PC-9 (cell line): ENCODE measurements at regions of chr11 and their contacts with region 1.

Region 1: DNA sequence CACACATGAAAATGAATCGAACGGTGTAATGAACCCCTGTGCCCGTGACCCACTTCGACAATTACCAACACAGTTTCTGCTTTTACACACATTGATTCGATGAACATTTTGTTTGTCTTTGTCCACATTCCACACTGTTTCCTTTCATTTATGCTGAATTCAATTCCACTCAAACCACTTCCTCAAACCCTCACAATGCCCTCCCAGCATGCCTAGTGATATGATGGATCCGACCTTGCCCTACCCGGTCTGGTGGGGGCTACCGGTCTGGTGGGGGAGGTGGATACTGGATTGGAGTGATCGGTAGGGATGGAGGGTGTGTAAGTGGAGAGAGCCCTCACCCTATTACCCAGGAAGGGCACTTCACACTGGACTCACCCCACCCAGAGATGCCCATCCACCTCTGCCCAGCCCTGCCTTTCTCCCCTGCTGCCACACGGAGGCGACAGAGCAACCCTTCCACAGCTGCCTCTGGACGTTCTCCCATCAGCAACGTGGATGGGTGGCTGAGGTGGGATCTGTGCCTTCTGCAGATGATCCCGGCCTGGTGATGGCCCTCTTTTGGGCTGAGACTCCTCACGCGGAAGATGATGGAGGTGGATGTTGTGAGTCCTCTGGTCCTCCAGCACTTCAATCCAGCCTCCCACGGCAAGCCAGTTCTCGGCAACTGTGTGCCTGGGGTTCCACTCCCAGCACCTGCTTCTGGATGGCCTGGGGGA is 33.0 kb upstream of the P2RY2 start:
- DNase-seq: peak; percentile 80 to 88
- H3K4me3 ChIP-seq: peak overlapping the region; percentile 36; the same call in 1 of the 2 replicates
- H3K27ac ChIP-seq: peak overlapping the region; percentile 82
- H3K4me1 ChIP-seq: peaks cover 49% of the 10 kb centered on the region
- H3K27me3 ChIP-seq: no peaks in the 10 kb centered on the region
- CTCF ChIP-seq: peak; percentile 96

Region 2: DNA sequence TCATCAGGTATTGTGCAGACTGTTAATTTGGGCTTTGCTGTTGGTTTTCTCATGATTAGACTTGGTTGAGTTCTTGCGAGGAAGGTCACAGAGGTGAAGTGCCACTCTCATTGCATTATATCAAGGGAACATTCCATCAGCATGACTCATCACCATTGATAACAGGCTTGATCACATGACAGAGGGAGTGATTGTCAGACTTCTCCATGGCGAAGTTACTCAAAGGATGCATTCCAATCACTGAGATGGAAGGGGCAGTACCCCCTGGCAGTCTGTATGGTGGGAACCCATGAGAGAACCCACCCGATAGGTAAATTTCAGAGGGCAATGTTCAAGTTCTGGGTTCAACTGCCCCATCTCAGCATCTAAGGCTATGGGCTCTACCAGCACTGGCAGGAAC is 13.6 kb after region 1 on chr11:
- CTCF ChIA-PET with region 1: interaction called, 21 read pairs
- POLR2A ChIA-PET with region 1: interaction called, 9 read pairs
- intact Hi-C with region 1: loop called (anchors 1 kb)
- DNase-seq: peak in 1 of 2 experiments; percentile 96
- H3K4me3 ChIP-seq: no peak overlapping the region
- H3K27ac ChIP-seq: peak overlapping the region; percentile 99
- H3K4me1 ChIP-seq: peaks cover 98% of the 10 kb centered on the region
- H3K27me3 ChIP-seq: no peaks in the 10 kb centered on the region
- CTCF ChIP-seq: no peak

Region 3: GRCh38 chr11:73227588-73228211 is 42.6 kb after region 1 on chr11:
- CTCF ChIA-PET with region 1: interaction called, 13 read pairs
- POLR2A ChIA-PET with region 1: interaction called, 4 read pairs
- intact Hi-C with region 1: loop called (anchors 1 kb)
- DNase-seq: peak; percentile 90 to 97
- H3K4me3 ChIP-seq: 0 out of 2 replicates have a peak overlapping the region, but pooled peaks have one; percentile 2
- H3K27ac ChIP-seq: peak overlapping the region; percentile 50
- H3K4me1 ChIP-seq: peaks cover 49% of the 10 kb centered on the region
- H3K27me3 ChIP-seq: no peaks in the 10 kb centered on the region
- CTCF ChIP-seq: peak; percentile 69

Region 4: GRCh38 chr11:73242251-73243079 is 57.4 kb after region 1 on chr11:
- CTCF ChIA-PET with region 1: interaction called, 10 read pairs
- POLR2A ChIA-PET with region 1: no interaction called
- intact Hi-C with region 1: loop called (anchors 1 kb)
- DNase-seq: peak in 1 of 2 experiments; percentile 79
- H3K4me3 ChIP-seq: no peak overlapping the region
- H3K27ac ChIP-seq: no peak overlapping the region
- H3K4me1 ChIP-seq: peaks cover 44% of the 10 kb centered on the region
- H3K27me3 ChIP-seq: no peaks in the 10 kb centered on the region
- CTCF ChIP-seq: peak; percentile 94

Region 5: DNA sequence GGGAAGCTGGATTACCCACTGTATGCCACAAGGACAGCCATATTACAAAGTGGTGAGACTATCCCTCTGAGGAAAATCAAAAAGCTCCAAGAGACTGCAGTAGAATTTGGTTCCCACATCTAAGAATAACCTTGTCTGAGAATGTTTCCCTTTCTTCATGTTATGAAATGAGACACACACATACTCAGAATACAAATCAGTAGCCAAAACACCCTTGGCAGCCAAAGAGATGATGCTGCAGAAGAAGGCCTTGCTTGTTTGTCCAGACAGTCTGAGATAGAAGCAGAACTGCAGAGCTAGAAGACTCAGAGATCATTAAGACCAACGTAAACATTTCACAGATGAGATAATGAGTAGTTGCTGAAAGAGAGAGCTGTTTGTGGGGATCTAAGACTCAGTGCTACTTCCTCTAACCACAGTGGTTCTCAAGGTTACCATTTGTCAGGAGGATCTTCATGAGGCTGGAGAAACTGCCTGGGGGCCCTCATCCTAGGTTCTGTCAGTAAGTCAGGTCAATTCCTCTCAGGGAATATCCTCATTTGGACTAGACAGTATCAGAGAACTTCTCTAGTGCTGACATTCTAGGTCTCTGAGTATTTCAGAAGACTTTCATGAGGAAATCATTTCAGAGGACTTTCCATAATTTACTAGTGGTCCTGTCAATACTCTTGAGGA is 230.0 kb after region 1 on chr11:
- CTCF ChIA-PET with region 1: no interaction called
- POLR2A ChIA-PET with region 1: no interaction called
- intact Hi-C with region 1: no loop called
- DNase-seq: no peak
- H3K4me3 ChIP-seq: no peak overlapping the region
- H3K27ac ChIP-seq: no peak overlapping the region
- H3K4me1 ChIP-seq: peaks cover 10% of the 10 kb centered on the region; the same call in 1 of the 2 replicates
- H3K27me3 ChIP-seq: no peaks in the 10 kb centered on the region
- CTCF ChIP-seq: no peak